Upper lobe of right lung (tissue), 1 donor: ENCODE measurements at regions of chrX and their contacts with region 1.

Region 1: GRCh38 chrX:46573331-46573891 is at the start of gene CHST7:
- DNase-seq: peak; percentile 84
- ATAC-seq: peak; percentile 88
- H3K4me3 ChIP-seq: peak within 1 kb of the TSS; percentile 61
- H3K27ac ChIP-seq: peak within 1 kb of the TSS; percentile 51
- H3K4me1 ChIP-seq: no peaks in the 10 kb centered on the region
- H3K27me3 ChIP-seq: no peaks in the 10 kb centered on the region
- CTCF ChIP-seq: peak; percentile 23
- total RNA-seq, gene CHST7: 7.5 TPM

Region 2: DNA sequence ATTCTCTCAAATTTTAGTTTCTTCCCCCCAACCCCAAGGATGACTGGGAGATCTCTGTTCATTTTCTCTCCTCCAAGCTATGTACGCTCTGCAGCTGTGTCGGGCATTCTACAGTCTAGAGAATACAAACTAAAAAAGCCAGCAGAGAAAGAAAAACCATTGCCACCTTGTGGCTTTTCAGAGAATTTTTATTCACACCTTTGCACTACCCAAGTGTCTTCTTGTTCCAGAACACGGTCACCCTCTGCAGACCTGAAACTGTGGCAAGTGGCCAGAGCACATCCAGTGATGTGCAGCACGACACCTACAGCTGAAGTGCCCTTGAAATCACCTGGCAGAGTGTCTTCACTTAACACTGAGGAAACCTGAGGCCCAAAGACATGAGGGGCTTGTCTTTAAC is 68.7 kb after region 1 on chrX:
- intact Hi-C with region 1: loop called (anchors 10 kb)
- DNase-seq: no peak
- ATAC-seq: peak; percentile 64
- H3K4me3 ChIP-seq: no peak overlapping the region
- H3K27ac ChIP-seq: no peak overlapping the region
- H3K4me1 ChIP-seq: no peaks in the 10 kb centered on the region
- H3K27me3 ChIP-seq: no peaks in the 10 kb centered on the region
- CTCF ChIP-seq: peak; percentile 52